ENCODE measurements at regions of chr11 and their contacts with region 1.

Region 1: DNA sequence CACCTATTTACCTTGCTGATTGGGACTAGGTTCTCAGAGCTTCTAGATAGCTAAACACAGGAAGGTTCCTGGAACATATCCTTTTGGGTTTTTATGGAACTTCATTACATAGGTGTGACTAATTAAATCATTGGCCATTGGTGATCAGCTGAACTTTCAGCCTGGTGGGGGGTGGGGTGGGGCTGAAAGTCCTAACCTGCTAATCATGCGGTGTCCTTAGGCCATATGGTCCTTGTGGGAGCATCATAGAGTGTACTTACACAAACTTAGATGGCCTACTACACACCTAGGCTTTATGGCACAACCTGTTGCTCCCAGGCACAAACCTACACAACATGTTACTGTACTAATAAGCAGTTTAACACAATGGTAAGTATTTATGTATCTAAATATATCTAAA is 8.6 kb upstream of the SELENOH start:
- DNase-seq: no peak
- H3K4me3 ChIP-seq: no peak overlapping the region
- H3K27ac ChIP-seq: no peak overlapping the region
- H3K4me1 ChIP-seq: peaks cover 12% of the 10 kb centered on the region
- CTCF ChIP-seq: no peak

Region 2: DNA sequence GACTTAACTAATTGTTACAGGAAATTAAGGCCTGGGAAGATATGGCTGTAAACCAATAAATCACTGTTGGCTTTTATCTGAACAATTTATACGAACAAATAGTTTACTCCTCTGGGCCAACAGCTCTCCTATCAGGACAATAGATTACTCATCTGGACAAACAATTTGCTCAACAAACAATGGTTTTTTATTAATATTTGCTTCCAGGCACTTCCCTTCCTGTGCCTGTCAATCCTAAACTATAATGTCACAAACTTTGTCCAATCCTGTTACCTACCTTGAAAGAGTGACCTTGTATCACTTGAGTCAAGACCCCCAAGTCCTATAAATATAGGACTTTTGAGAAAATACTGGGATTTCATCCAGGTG is 203.4 kb after region 1 on chr11:
- CTCF ChIA-PET with region 1: no interaction called
- POLR2A ChIA-PET with region 1: no interaction called
- intact Hi-C with region 1: no loop called
- DNase-seq: no peak
- H3K4me3 ChIP-seq: no peak overlapping the region
- H3K27ac ChIP-seq: no peak overlapping the region
- H3K4me1 ChIP-seq: no peaks in the 10 kb centered on the region
- CTCF ChIP-seq: no peak

Region 3: DNA sequence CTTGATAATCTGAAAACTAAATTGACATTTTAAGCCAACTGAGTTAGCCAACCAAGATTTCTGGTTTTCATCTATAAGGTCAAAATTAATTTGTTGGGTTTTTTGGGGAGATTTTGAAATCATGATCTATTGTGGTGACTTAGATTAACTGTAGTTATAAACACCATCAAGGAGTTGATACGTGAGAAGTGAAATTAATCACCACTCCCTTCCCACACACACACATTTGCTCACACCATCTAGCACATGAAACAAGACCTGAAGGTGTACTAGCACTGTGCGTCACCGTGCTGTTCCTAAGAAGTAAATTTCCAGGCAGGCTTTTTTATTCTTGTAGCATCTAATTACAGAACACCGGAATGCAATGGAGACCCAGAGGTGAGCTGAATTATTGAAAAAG is 773.2 kb after region 1 on chr11:
- CTCF ChIA-PET with region 1: interaction called, 11 read pairs
- POLR2A ChIA-PET with region 1: no interaction called
- intact Hi-C with region 1: no loop called
- DNase-seq: no peak
- H3K4me3 ChIP-seq: no peak overlapping the region
- H3K27ac ChIP-seq: no peak overlapping the region
- H3K4me1 ChIP-seq: peaks cover 16% of the 10 kb centered on the region
- CTCF ChIP-seq: no peak